ENCODE measurements at regions of chr5 and their contacts with region 1.

Region 1: DNA sequence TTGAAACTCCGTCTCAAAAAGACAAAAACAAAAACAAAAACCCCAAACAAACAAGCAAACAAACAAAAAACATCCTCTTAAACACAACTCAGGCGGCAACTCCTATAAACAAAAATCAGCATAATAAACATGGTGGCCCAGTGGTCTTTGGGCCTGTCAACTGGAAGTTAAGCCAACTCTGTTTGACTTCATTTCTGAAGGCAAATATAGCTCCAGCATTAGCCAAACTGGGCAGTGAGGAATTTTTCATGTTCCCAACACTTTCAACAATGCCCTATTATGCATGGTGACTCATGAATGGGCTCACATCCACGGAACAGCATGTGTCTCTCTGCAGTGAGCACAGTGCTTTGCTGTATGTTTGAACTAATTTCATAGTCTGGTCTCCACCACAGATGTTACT is 143.9 kb upstream of the STC2 start:
- DNase-seq: peak; percentile 11 to 96 (median 84)

Region 2: DNA sequence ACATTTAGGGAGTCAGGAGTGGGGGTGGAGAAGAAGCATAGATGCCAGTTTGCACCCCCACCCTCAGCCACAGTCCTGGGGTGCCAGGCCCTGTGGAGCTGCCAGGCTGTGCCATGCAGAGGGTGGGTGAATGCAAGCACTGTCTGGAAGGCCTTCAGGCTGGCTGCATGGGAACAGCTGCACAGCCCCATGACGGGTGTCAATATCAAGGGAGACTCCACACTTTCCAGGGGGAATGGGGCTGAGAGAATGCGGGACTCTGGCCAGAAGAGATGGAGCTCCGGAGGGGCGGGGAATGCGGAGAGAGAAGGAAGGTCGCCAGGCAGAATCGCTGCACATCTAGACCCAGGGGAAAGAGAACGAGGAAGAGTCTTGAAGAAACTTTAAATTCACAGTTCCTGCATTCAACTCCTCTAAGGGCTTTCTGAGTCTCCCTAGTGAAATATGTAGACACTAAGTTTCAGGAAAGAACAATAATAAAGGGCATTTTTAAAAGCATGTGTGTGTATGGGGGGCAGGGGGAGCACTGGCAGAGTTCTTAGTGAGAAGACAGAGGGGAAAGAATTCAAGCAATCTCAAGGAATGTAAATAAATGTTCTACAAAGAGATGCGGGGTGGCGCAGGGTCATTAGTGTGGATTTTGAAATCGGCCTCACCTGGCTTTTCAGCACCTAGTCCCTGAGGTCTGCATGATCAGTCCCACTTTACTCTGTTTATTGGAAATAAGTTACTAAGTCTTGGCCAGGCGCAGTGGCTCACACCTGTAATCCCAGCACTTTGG is 85.2 kb after region 1 on chr5:
- intact Hi-C with region 1: loop called (anchors 2 kb)
- DNase-seq: peak; percentile 79 to 98 (median 93)

Measured in head of caudate nucleus (tissue), 42 donors.